ENCODE measurements at regions of chr13 and their contacts with region 1.

Region 1: GRCh38 chr13:31909864-31910551 is 121.6 kb upstream of the FRY start:
- DNase-seq: peak; percentile 38
- H3K4me3 Mint-ChIP-seq: no peak overlapping the region
- H3K27ac Mint-ChIP-seq: no peak overlapping the region
- H3K4me1 Mint-ChIP-seq: peaks cover 27% of the 10 kb centered on the region
- H3K27me3 Mint-ChIP-seq: peaks cover 15% of the 10 kb centered on the region

Region 2: DNA sequence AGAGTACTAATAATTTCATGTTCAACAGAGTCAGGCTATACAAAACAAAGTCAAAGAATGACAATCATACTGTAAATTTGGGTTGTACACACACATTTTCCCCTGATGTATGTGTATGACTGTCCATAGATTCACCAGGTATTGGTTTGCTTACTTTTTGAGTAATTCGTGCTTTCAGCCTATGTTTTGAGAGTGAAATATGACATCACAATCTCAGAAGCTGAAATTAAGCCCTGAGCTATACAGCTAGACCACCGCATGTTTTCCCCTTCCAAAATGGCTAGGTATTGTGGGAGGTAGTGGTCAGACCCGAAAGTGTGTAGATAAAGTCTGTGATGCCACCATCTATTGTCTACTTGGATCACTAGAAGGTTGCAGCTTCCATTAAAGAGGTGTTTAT is 1705.4 kb before region 1 on chr13:
- intact Hi-C with region 1: no loop called
- DNase-seq: no peak
- H3K4me3 Mint-ChIP-seq: no peak overlapping the region
- H3K27ac Mint-ChIP-seq: no peak overlapping the region
- H3K4me1 Mint-ChIP-seq: no peaks in the 10 kb centered on the region
- H3K27me3 Mint-ChIP-seq: peaks cover 1% of the 10 kb centered on the region

Region 3: GRCh38 chr13:31930901-31931522 is 21.0 kb after region 1 on chr13:
- intact Hi-C with region 1: loop called (anchors 1 kb)
- DNase-seq: peak; percentile 48
- H3K4me3 Mint-ChIP-seq: no peak overlapping the region
- H3K27ac Mint-ChIP-seq: no peak overlapping the region
- H3K4me1 Mint-ChIP-seq: peaks cover 17% of the 10 kb centered on the region
- H3K27me3 Mint-ChIP-seq: peaks cover 4% of the 10 kb centered on the region

Region 4: DNA sequence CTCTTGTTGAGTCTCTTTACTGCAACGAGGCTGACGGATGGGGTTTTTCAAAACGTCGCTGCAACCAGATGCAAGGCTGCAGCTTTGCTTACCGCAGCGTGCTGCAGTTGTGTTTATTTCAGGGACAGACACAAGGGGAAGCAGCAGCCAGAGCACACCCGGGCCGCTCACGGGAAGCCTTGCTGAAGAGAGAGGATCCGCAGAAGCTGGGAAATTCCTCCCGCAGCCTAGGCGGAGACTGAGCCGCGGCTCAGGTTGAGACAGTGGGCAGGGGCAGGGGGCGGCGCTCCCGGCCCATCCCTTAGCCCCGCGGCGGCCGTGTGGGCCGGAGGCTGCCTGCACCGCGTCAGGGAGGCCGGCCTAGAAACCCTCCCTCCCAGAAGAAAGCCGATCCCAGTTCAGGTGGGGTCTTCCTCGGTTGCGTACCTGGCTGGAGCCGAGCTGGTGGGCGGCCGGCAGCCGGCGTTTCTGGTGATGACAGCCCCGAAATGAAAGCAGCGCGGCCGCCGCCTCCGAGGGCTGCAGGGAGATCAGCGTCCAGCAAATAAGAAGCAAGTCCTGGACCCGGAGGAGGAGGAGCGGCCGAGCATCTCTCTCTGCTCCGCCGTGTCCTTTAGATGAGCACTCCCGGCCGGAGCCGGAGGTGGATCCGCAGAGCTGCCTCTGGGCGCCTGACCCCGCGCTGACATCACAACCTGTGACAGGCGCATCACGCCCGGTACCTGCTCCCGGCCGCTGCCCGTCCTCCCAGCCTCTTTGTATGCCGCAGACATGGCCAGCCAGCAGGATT is 121.2 kb after region 1 on chr13 and contains the start of gene FRY:
- intact Hi-C with region 1: loop called (anchors 2 kb)
- DNase-seq: peak; percentile 44
- H3K4me3 Mint-ChIP-seq: peak within 1 kb of the TSS; percentile 94
- H3K27ac Mint-ChIP-seq: peak within 1 kb of the TSS; percentile 82
- H3K4me1 Mint-ChIP-seq: peaks cover 52% of the 10 kb centered on the region
- H3K27me3 Mint-ChIP-seq: peaks cover 6% of the 10 kb centered on the region
- total RNA-seq, gene FRY: 2.4 and 3.2 TPM in 2 replicates

Region 5: GRCh38 chr13:32045982-32046785 is 136.2 kb after region 1 on chr13:
- intact Hi-C with region 1: no loop called
- DNase-seq: peak; percentile 9
- H3K4me3 Mint-ChIP-seq: peak overlapping the region; percentile 43
- H3K27ac Mint-ChIP-seq: peak overlapping the region; percentile 79
- H3K4me1 Mint-ChIP-seq: peaks cover 68% of the 10 kb centered on the region
- H3K27me3 Mint-ChIP-seq: no peaks in the 10 kb centered on the region

Region 6: DNA sequence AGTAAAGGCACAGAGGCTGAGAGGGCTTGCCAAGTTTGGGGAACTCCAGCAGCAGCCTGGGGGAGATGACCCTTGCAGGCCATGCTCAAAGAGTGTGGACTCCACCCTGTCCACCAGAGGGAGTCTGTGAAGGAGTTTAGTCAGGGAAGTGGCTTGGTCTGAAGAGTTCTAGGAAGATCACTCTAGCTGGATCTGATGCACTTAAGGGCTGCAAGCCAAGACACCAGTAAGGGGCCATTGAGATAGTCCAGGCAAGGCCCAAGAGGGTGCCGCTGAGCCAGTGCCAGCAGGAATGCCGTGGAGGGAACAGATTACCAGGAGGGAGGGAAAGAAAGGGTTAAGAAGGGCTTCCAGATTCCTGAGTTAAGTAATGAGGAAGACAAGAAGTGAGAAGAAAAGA is 336.5 kb after region 1 on chr13:
- intact Hi-C with region 1: loop called (anchors 1 kb)
- DNase-seq: no peak
- H3K4me3 Mint-ChIP-seq: no peak overlapping the region
- H3K27ac Mint-ChIP-seq: no peak overlapping the region
- H3K4me1 Mint-ChIP-seq: no peaks in the 10 kb centered on the region
- H3K27me3 Mint-ChIP-seq: peaks cover 2% of the 10 kb centered on the region

Region 7: GRCh38 chr13:32443111-32443510 is 533.1 kb after region 1 on chr13:
- intact Hi-C with region 1: loop called (anchors 10 kb)
- DNase-seq: no peak
- H3K4me3 Mint-ChIP-seq: no peak overlapping the region
- H3K27ac Mint-ChIP-seq: no peak overlapping the region
- H3K4me1 Mint-ChIP-seq: peaks cover 16% of the 10 kb centered on the region
- H3K27me3 Mint-ChIP-seq: no peaks in the 10 kb centered on the region

Region 8: GRCh38 chr13:32581177-32581786 is 671.3 kb after region 1 on chr13:
- intact Hi-C with region 1: loop called (anchors 5 kb)
- DNase-seq: no peak
- H3K4me3 Mint-ChIP-seq: no peak overlapping the region
- H3K27ac Mint-ChIP-seq: no peak overlapping the region
- H3K4me1 Mint-ChIP-seq: peaks cover 12% of the 10 kb centered on the region
- H3K27me3 Mint-ChIP-seq: peaks cover 19% of the 10 kb centered on the region

Measured in activated T-helper 1 cell treated with anti-CD3 and anti-CD28 coated beads, Interleukin-12 subunit alpha, Interleukin-12 subunit beta, Interleukin-2, Interleukin-4 antibody, amounts not matched to agents 30 ng/mL and 10 ng/mL and 1 ng/mL, durations not matched to agents 14 hours and 24 hours and 36 hours (primary cell).